MCF 10A (cell line): ENCODE measurements at regions of chr9 and their contacts with region 1.

Region 1: GRCh38 chr9:95127249-95128176 is 190.0 kb downstream of the FANCC start:
- DNase-seq: peak; percentile 81
- H3K4me3 Mint-ChIP-seq: no peak overlapping the region
- H3K27ac Mint-ChIP-seq: no peak overlapping the region
- H3K4me1 Mint-ChIP-seq: peaks cover 5% of the 10 kb centered on the region
- H3K27me3 Mint-ChIP-seq: no peaks in the 10 kb centered on the region
- CTCF ChIP-seq: peak; percentile 97

Region 2: DNA sequence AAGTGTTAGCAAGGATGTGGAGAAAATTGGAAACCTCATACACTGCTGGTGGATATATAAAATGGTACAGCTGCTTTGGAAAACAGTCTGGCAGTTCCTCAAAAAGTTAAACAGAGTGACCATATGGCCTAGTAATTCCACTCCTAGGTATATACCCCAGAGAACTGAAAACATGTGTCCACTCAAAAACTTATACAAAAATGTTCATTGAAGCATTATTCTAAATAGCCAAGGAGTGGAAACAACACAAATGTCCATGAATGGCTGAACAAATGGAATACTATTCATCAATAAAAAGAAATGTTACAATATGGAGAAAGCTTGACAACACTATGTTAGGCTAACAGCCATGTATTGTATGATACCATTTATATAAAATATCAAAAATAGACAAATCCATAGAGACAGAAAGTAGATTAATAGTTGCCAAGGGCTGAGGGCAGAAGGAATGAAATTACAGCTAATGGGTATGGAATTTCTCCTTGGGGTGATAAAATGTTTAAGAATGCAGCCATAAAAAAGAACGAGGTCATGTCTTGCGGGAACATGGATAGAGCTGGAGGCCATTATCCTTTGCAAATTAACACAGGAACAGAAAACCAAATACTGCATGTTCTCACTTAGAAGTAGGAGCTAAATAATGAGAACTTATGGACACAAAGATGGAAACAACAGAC is 454.6 kb before region 1 on chr9:
- CTCF ChIA-PET with region 1: interaction called, 457 read pairs
- POLR2A ChIA-PET with region 1: interaction called, 9 read pairs
- intact Hi-C with region 1: loop called (anchors 1 kb)
- DNase-seq: peak; percentile 38
- H3K4me3 Mint-ChIP-seq: no peak overlapping the region
- H3K27ac Mint-ChIP-seq: peak overlapping the region; percentile 60
- H3K4me1 Mint-ChIP-seq: peaks cover 24% of the 10 kb centered on the region
- H3K27me3 Mint-ChIP-seq: no peaks in the 10 kb centered on the region
- CTCF ChIP-seq: no peak

Region 3: DNA sequence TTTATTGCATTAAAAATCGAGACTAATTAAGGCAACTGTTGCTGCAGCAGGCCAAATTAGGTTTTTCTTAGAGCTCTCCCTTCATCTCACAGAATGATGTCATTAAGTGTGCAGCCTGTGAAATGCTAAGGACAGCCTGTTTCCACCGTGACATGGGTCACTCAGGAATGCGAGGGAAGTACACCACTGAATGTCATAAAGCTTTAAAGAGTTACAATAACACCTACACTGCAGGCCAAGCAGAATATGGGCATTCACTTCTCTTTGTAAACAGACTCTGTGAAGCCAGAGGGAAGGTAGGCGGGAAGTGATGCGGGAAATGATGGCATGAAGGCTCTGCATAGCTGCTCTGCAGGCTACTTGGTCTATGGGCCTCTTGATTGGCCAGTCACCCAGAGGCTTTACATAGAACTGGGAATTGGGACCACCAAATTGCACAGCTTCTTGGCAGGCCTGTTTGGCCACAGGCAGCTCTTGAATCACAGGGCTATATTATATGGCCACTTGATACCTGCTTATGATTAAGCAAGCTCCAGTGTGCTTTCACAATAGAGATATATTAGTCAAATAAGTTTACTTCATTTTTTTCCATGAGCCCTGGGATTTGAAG is 429.4 kb before region 1 on chr9:
- CTCF ChIA-PET with region 1: interaction called, 20 read pairs
- POLR2A ChIA-PET with region 1: no interaction called
- intact Hi-C with region 1: no loop called
- DNase-seq: peak; percentile 29
- H3K4me3 Mint-ChIP-seq: no peak overlapping the region
- H3K27ac Mint-ChIP-seq: no peak overlapping the region
- H3K4me1 Mint-ChIP-seq: no peaks in the 10 kb centered on the region
- H3K27me3 Mint-ChIP-seq: peaks cover 3% of the 10 kb centered on the region
- CTCF ChIP-seq: no peak

Region 4: DNA sequence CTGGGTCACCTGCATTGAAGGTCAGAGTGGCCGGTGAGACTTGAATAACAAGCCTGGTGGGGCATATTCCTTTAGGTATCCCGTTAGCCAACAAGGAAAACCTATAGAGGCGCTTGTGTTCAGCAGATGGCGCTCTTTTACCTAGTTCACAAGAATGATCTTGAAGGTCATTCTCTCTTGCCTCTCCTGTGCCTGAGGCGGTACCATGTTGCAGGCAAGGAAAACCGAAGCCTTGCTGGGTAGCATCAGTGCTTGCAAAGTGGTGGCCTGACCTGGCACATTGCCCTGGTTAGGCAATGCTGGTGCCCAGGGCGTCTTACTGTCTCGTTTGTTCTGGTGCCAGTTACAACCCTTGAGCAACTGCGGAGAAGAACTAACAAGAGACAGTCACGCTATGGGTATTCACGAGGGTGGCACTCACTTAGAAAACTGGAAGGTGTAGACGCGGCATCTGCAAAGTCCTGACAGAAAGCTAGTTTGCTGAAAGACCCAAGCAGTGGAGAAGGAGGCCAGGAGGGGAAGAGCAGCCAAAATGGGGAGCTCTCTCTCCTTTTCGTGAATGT is 344.3 kb before region 1 on chr9:
- CTCF ChIA-PET with region 1: interaction called, 117 read pairs
- POLR2A ChIA-PET with region 1: interaction called, 5 read pairs
- intact Hi-C with region 1: loop called (anchors 1 kb)
- DNase-seq: peak; percentile 100
- H3K4me3 Mint-ChIP-seq: no peak overlapping the region
- H3K27ac Mint-ChIP-seq: no peak overlapping the region
- H3K4me1 Mint-ChIP-seq: peaks cover 23% of the 10 kb centered on the region
- H3K27me3 Mint-ChIP-seq: no peaks in the 10 kb centered on the region
- CTCF ChIP-seq: peak; percentile 70

Region 5: DNA sequence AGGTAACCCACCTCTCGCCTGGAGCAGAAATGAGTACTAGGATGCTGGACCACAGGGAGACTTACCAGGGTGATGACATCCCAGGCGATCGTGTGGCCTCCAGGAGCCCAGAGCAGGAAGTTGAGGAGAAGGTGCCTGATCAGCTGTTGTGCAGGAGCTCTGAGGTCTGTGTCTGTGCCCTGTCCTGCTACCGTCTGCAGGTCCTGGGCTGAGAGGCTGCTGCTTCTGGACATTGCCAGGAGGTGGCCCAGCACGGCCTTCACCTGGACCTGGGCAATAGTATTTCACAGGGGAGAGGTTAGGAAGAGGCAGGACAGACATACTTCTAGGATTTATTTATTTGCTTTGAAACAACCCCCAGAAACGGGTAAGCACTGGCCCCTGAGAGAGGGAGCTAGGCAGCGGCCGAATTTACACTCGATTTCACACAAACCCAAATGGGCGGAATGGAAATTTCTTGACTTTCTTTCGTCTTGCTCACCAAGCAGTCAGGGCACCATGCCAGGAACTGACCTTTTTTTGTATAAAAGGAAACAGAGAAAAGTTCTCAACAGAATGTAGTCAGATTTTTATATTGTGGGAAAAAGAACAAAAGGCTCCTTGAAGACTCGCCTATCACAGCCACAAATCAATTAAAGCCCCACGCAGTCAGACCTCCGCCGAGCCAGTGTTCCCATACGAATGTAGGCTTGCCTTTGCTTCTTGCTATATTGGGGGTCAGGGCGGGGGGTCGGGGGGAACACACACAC is 20.3 kb before region 1 on chr9:
- CTCF ChIA-PET with region 1: interaction called, 18 read pairs
- POLR2A ChIA-PET with region 1: no interaction called
- intact Hi-C with region 1: no loop called
- DNase-seq: no peak
- H3K4me3 Mint-ChIP-seq: no peak overlapping the region
- H3K27ac Mint-ChIP-seq: peak overlapping the region; percentile 23
- H3K4me1 Mint-ChIP-seq: peaks cover 11% of the 10 kb centered on the region
- H3K27me3 Mint-ChIP-seq: no peaks in the 10 kb centered on the region
- CTCF ChIP-seq: no peak

Region 6: DNA sequence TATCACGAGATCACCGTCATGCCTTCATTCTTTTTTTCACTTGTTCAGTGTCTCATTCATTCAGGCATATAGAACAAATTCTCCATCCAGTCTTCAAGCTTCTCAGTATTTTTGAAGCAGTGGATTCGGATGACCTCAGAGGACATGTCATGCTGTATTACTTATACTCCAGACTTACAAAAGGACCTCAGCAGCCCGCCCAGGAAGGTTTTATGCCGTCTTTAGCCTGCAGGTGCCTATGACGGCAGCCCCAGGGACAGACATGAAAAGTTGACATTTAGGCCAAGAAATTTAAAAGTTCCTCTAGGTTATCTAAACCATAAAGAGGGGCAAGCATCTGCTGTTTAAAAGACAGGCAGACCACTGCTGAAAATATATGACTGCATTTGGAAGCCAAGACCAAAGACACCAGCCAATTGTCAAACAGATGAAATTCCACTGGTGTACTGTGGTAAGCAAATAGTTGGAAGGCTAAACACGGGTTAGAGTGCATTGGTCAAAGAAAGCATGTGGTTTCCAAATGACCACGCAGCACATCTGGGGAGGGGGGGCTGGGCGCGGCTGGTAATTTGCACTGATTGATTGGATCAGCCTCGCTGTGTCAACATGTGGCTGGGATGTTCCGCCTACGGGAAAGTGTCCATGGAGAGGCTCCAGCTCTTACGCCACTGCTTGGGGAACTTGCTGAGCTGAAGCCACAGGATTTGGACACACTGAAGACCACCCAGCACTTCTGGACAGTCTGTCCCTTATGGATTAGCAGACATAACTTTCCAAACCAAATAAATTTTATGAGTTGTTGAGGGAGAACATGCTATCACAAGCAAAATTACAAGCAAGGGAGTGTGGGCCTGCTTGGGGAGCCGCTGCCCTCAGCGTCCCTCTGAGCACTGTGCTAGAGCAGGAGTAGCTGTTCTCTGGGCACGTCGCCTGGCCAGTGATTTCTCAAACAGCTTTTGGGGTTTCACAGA is 16.4 kb after region 1 on chr9:
- CTCF ChIA-PET with region 1: interaction called, 14 read pairs
- POLR2A ChIA-PET with region 1: no interaction called
- intact Hi-C with region 1: no loop called
- DNase-seq: no peak
- H3K4me3 Mint-ChIP-seq: no peak overlapping the region
- H3K27ac Mint-ChIP-seq: no peak overlapping the region
- H3K4me1 Mint-ChIP-seq: no peaks in the 10 kb centered on the region
- H3K27me3 Mint-ChIP-seq: no peaks in the 10 kb centered on the region
- CTCF ChIP-seq: no peak

Region 7: GRCh38 chr9:95181226-95181818 is 53.8 kb after region 1 on chr9:
- CTCF ChIA-PET with region 1: interaction called, 11 read pairs
- POLR2A ChIA-PET with region 1: no interaction called
- intact Hi-C with region 1: no loop called
- DNase-seq: peak; percentile 19
- H3K4me3 Mint-ChIP-seq: no peak overlapping the region
- H3K27ac Mint-ChIP-seq: peak overlapping the region; percentile 39
- H3K4me1 Mint-ChIP-seq: no peaks in the 10 kb centered on the region
- H3K27me3 Mint-ChIP-seq: no peaks in the 10 kb centered on the region
- CTCF ChIP-seq: peak; percentile 32